Heart right ventricle (tissue), 16 donors: ENCODE measurements at regions of chr10 and their contacts with region 1.

Region 1: DNA sequence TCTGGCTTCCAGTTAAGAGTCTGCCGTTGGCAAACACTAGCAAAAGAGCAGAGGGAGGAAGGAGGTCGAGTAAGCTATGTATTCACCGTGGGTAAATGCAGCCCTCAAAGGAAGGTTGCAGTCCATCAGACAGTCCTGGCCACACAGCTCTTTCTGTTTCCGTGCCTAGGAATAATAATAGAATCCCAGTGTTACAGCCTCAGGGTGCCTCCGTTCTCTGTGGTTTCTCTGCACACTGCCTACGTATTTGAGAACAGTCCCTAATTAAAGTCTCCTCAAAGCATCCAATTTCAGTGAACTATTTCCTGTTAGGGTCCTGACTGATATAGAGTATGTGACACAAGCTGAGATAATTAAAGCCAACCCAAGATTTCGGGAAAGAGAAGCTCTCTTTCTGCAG is 176.7 kb downstream of the GPAM start:
- DNase-seq: no peak
- ATAC-seq: no peak
- H3K4me3 ChIP-seq: no peak overlapping the region
- H3K27ac ChIP-seq: no peak overlapping the region
- H3K4me1 ChIP-seq: no peaks in the 10 kb centered on the region
- H3K27me3 ChIP-seq: peaks cover 0 to 8% (median 0%) of the 10 kb centered on the region in 7 donors
- CTCF ChIP-seq: no peak

Region 2: GRCh38 chr10:111063471-111063870 is 943.4 kb before region 1 on chr10:
- intact Hi-C with region 1: loop called in 1 of 10 experiments (anchors 5 kb)
- DNase-seq: no peak
- ATAC-seq: no peak
- H3K4me3 ChIP-seq: no peak overlapping the region
- H3K27ac ChIP-seq: no peak overlapping the region
- H3K4me1 ChIP-seq: no peaks in the 10 kb centered on the region
- H3K27me3 ChIP-seq: peaks cover 0 to 26% (median 8%) of the 10 kb centered on the region in 7 donors
- CTCF ChIP-seq: no peak

Region 3: DNA sequence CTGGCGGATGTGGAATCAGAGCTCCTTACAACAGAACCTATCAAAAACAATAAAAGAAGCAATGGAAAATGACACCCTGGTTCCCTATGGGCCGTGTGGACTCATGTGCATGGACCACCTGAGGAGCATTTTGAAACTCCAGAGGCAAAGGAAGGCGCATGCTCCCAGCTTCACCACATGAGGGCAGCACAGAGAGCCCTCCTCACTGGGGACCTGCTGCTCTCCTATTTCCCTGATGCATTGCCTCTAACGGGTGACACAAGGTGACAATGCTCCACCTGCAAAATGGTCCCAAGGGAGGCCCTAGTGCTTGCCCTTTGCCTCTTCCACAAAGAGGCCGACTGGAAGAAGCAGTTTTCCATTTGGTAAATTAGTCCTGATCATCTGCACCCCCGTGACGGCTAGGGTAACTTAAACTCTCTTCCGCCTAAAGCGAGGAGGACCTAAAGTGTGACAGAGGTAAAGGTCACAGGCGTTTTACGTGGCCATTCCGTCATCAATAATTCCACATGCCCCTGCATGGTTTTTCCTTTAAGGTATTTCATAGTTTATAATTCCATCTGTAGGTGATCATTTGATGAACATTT is 109.1 kb after region 1 on chr10:
- intact Hi-C with region 1: no loop called
- DNase-seq: no peak
- ATAC-seq: peak in 2 of 8 donors; percentile 46 to 65
- H3K4me3 ChIP-seq: no peak overlapping the region
- H3K27ac ChIP-seq: no peak overlapping the region
- H3K4me1 ChIP-seq: no peaks in the 10 kb centered on the region
- H3K27me3 ChIP-seq: peaks cover 0 to under 1% (median 0%) of the 10 kb centered on the region in 7 donors
- CTCF ChIP-seq: peak; percentile 9 to 74 (median 67)

Region 4: DNA sequence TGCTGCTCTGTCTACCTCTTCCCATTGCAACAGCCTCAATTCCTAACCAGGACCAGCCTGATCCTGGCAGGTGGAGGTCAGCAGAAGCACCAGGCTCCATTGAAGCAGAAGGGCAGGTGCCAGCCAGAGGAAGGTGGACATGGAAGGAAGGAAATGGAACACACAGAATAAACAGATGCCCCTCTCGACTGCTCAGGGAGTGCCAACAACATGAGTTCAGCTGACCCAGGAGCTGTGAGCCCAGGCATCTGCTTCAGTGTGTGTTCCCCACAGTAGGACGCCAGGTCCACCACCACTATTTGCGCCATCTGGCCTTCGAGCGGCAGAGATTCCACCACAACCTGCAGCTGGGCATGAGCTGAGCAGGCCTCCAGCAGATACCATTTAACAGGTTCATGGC is 120.1 kb after region 1 on chr10:
- intact Hi-C with region 1: no loop called
- DNase-seq: no peak
- ATAC-seq: no peak
- H3K4me3 ChIP-seq: no peak overlapping the region
- H3K27ac ChIP-seq: no peak overlapping the region
- H3K4me1 ChIP-seq: no peaks in the 10 kb centered on the region
- H3K27me3 ChIP-seq: peaks cover 0 to 7% (median 0%) of the 10 kb centered on the region in 7 donors
- CTCF ChIP-seq: no peak

Region 5: GRCh38 chr10:112375721-112376395 is 369.0 kb after region 1 on chr10:
- intact Hi-C with region 1: no loop called
- DNase-seq: peak; percentile 67 to 78
- ATAC-seq: peak; percentile 82 to 93 (median 88)
- H3K4me3 ChIP-seq: peak overlapping the region in 9 of 10 donors; percentile 36 to 64 (median 53)
- H3K27ac ChIP-seq: peak overlapping the region; percentile 62 to 98 (median 81)
- H3K4me1 ChIP-seq: peaks cover 0 to 33% (median 22%) of the 10 kb centered on the region in 9 donors
- H3K27me3 ChIP-seq: no peaks in the 10 kb centered on the region
- CTCF ChIP-seq: peak in 2 of 9 donors; percentile 22 to 30